ENCODE measurements at regions of chr5 and their contacts with region 1.

Region 1: GRCh38 chr5:59188419-59189225 is 605.7 kb downstream of the RAB3C start:
- DNase-seq: peak; percentile 66
- H3K4me3 Mint-ChIP-seq: peak overlapping the region; percentile 9
- H3K27ac Mint-ChIP-seq: no peak overlapping the region
- H3K4me1 Mint-ChIP-seq: peaks cover 8% of the 10 kb centered on the region
- H3K27me3 Mint-ChIP-seq: peaks cover 45% of the 10 kb centered on the region

Region 2: DNA sequence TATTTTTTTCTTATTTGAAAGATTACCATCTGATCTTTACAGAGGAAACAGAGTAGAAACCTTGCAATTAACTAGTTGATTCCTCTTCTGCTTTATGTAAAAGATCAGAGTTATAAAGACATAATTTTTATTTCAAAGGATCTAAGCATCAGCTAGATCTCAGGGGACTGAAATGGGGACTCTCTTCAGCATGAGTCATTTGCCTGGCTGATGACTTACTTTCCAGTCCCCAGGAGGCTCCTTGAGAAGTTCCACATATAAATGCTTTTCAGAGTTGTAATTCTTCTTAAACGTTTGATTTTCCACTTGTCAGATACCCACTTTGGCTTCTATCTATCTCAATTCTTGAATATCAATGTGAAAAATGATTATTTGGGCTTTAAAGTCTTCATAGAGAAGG is 216.3 kb before region 1 on chr5:
- CTCF ChIA-PET with region 1: no interaction called
- POLR2A ChIA-PET with region 1: no interaction called
- DNase-seq: no peak
- H3K4me3 Mint-ChIP-seq: no peak overlapping the region
- H3K27ac Mint-ChIP-seq: no peak overlapping the region
- H3K4me1 Mint-ChIP-seq: peaks cover 4% of the 10 kb centered on the region
- H3K27me3 Mint-ChIP-seq: no peaks in the 10 kb centered on the region

Region 3: GRCh38 chr5:59039296-59040023 is 149.2 kb before region 1 on chr5:
- CTCF ChIA-PET with region 1: interaction called, 19 read pairs
- POLR2A ChIA-PET with region 1: no interaction called
- DNase-seq: peak; percentile 95
- H3K4me3 Mint-ChIP-seq: peak overlapping the region; percentile 84
- H3K27ac Mint-ChIP-seq: peak overlapping the region; percentile 97
- H3K4me1 Mint-ChIP-seq: peaks cover 46% of the 10 kb centered on the region
- H3K27me3 Mint-ChIP-seq: no peaks in the 10 kb centered on the region

Region 4: GRCh38 chr5:59367791-59368394 is 179.3 kb after region 1 on chr5:
- CTCF ChIA-PET with region 1: interaction called, 44 read pairs
- POLR2A ChIA-PET with region 1: no interaction called
- DNase-seq: peak; percentile 48
- H3K4me3 Mint-ChIP-seq: no peak overlapping the region
- H3K27ac Mint-ChIP-seq: no peak overlapping the region
- H3K4me1 Mint-ChIP-seq: peaks cover 8% of the 10 kb centered on the region
- H3K27me3 Mint-ChIP-seq: peaks cover 26% of the 10 kb centered on the region

Region 5: GRCh38 chr5:59380350-59380951 is 191.8 kb after region 1 on chr5:
- CTCF ChIA-PET with region 1: interaction called, 53 read pairs
- POLR2A ChIA-PET with region 1: interaction called, 3 read pairs
- DNase-seq: peak; percentile 22
- H3K4me3 Mint-ChIP-seq: no peak overlapping the region
- H3K27ac Mint-ChIP-seq: no peak overlapping the region
- H3K4me1 Mint-ChIP-seq: peaks cover 3% of the 10 kb centered on the region
- H3K27me3 Mint-ChIP-seq: peaks cover 9% of the 10 kb centered on the region

Region 6: GRCh38 chr5:59390074-59390659 is 201.5 kb after region 1 on chr5:
- CTCF ChIA-PET with region 1: interaction called, 10 read pairs
- POLR2A ChIA-PET with region 1: no interaction called
- DNase-seq: no peak
- H3K4me3 Mint-ChIP-seq: no peak overlapping the region
- H3K27ac Mint-ChIP-seq: no peak overlapping the region
- H3K4me1 Mint-ChIP-seq: no peaks in the 10 kb centered on the region
- H3K27me3 Mint-ChIP-seq: peaks cover 17% of the 10 kb centered on the region